Mammary epithelial cell (primary cell): ENCODE measurements at regions of chr3 and their contacts with region 1.

Region 1: GRCh38 chr3:159763602-159764489 is 224.8 kb upstream of the IL12A start:
- DNase-seq: peak; percentile 93
- H3K4me3 ChIP-seq: peak overlapping the region; percentile 59 to 82 (median 71)
- H3K27ac ChIP-seq: peak overlapping the region; percentile 93
- H3K4me1 ChIP-seq: peaks cover 51% of the 10 kb centered on the region
- H3K27me3 ChIP-seq: no peaks in the 10 kb centered on the region
- CTCF ChIP-seq: peak in 1 of 2 donors; percentile 24

Region 2: DNA sequence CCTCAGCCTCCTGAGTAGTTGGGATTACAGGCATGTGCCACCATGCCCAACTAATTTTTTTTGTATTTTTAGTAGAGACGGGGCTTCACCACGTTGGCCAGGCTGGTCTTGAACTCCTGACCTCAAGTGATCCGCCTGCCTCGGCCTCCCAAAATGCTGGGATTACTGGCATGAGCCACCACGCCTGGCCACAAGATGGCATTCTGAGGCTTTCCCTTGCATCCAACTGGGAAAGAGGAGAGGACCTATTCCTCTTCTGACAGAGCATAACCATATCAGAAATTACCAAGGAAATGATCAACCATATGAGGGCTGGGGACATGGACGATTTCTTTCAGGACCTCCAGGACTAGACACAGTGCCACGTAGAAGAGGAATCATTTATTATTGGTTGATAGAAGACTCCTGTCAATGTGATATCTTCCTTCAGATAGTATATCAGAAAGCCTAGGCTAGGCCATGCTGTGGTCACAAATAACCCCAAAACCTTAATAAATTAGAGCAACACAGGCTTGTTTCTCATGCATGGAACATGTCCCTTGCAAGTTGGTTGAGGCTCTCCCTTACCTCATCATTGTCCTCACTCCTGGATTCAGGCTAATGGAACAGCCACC is 147.5 kb before region 1 on chr3:
- CTCF ChIA-PET with region 1: interaction called, 3 read pairs
- dilution Hi-C with region 1: no loop called
- in situ Hi-C with region 1: no loop called
- intact Hi-C with region 1: loop called (anchors 1 kb)
- DNase-seq: peak; percentile 48
- H3K4me3 ChIP-seq: no peak overlapping the region
- H3K27ac ChIP-seq: no peak overlapping the region
- H3K4me1 ChIP-seq: peaks cover 14% of the 10 kb centered on the region
- H3K27me3 ChIP-seq: no peaks in the 10 kb centered on the region
- CTCF ChIP-seq: peak; percentile 49 to 70

Region 3: GRCh38 chr3:159732172-159733111 is 31.4 kb before region 1 on chr3:
- CTCF ChIA-PET with region 1: no interaction called
- dilution Hi-C with region 1: no loop called
- in situ Hi-C with region 1: no loop called
- intact Hi-C with region 1: loop called (anchors 1 kb)
- DNase-seq: peak; percentile 82
- H3K4me3 ChIP-seq: peak overlapping the region; percentile 38 to 52 (median 42)
- H3K27ac ChIP-seq: no peak overlapping the region
- H3K4me1 ChIP-seq: peaks cover 19% of the 10 kb centered on the region
- H3K27me3 ChIP-seq: no peaks in the 10 kb centered on the region
- CTCF ChIP-seq: peak; percentile 16 to 42

Region 4: DNA sequence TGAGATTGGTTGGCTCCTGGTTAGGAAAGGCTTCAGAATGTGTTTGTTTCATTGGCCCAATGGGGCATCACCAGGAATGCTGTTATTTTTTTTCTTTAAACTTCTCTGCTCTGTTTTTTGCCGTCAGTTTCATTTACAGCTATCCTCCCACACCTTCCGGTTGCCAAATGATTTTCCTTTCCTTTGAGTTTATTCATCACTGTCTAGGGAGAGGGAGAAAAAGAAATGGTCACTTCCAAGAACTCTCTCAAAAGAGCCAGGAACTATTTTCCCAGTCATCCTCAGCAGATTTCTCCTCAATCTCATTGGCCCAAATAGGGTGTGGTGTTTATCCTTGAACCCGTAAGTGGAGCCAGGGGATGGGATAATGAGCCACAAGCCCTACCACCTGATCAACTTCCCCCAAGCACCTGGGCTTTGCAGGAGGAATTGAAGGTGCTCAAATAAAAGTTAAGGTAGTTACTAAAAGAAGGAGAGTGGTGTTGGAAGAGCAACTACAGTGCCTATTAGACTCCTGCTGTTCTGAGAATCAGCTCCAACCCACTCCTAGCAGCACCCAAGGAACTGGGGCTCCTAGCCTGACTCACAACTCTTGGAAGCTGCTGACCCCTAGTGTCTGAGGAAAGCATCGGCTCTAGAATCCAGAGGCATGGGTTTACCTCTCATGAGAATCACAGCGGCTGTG is 41.0 kb after region 1 on chr3:
- CTCF ChIA-PET with region 1: no interaction called
- dilution Hi-C with region 1: no loop called
- in situ Hi-C with region 1: no loop called
- intact Hi-C with region 1: loop called (anchors 1 kb)
- DNase-seq: peak; percentile 79
- H3K4me3 ChIP-seq: no peak overlapping the region
- H3K27ac ChIP-seq: no peak overlapping the region
- H3K4me1 ChIP-seq: peaks cover 27% of the 10 kb centered on the region
- H3K27me3 ChIP-seq: no peaks in the 10 kb centered on the region
- CTCF ChIP-seq: peak; percentile 96 to 98

Region 5: GRCh38 chr3:159884661-159885402 is 121.0 kb after region 1 on chr3:
- CTCF ChIA-PET with region 1: no interaction called
- dilution Hi-C with region 1: no loop called
- in situ Hi-C with region 1: no loop called
- intact Hi-C with region 1: loop called (anchors 2 kb)
- DNase-seq: no peak
- H3K4me3 ChIP-seq: no peak overlapping the region
- H3K27ac ChIP-seq: no peak overlapping the region
- H3K4me1 ChIP-seq: peaks cover 33% of the 10 kb centered on the region
- H3K27me3 ChIP-seq: no peaks in the 10 kb centered on the region
- CTCF ChIP-seq: peak; percentile 30 to 50